Endothelial cell of umbilical vein (primary cell): ENCODE measurements at regions of chr12 and their contacts with region 1.

Region 1: DNA sequence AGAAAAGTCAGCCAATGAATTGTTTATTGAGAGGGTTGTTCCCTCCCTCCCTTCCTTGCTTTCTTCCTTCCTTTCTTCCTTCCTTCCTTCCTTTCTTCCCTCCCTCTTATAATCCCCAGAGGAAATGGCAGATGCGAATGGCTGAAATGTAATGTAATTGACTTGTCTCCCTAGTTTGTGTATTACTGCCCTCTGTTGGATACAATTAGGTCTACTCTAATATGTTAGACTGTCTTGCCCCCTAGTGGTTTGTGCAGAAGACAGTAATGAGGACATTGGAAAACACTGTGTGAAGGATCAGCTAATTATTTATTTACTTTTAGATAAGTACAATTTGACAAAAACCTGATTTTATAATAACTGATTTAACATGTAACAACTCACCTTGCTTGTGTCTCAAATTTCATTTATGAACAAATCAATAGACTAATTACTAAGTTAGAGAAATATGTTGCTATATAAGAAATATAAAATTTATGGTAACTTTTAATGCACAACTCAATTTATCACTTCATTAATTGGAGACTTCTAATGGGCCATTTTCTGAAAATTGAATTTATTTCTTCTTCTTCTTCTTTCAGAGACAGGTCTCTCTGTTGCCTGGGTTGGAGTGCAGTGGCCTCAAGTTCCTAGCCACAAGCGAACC is 229.8 kb upstream of the LRIG3 start:
- DNase-seq: peak; percentile 89
- H3K4me3 ChIP-seq: no peak overlapping the region
- H3K27ac ChIP-seq: no peak overlapping the region
- H3K4me1 ChIP-seq: no peaks in the 10 kb centered on the region
- H3K27me3 ChIP-seq: peaks cover 0 to 2% of the 10 kb centered on the region in 2 experiments
- CTCF ChIP-seq: peak; percentile 79 to 83
- POLR2A ChIP-seq: no peak

Region 2: DNA sequence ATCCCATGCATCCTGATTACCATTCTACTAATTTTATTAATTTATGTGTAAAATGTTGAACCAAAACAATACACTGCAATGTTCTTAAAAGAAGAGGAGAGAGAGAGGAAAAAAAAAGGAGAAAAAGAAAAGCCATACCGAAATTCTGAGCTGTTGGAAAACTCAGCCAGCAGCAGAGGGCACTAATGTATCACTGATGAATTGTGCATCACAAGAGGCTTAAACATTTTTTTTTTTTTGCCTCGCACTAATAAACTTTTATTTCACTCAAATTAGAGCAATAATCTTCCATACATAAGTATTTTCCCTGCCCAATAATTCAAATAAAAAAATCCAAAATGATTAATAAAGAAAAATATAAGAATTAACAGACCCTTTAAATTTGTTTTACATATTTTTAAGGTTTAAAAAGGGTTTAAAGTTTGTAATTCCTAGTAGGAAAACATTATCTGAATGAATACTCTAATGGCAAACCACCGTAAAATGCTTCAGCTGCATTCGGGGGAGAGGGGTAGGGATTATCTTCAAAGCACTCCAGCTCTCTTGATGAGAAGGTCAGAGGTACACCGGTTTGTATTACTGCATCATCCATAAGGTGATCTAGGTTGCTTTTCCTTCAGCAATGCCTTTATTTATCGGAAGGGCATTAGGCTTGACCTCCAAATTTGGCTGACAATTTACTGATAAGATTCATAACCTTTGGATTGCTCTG is 1166.8 kb before region 1 on chr12:
- CTCF ChIA-PET with region 1: interaction called, 45 read pairs
- POLR2A ChIA-PET with region 1: no interaction called
- dilution Hi-C with region 1: no loop called
- intact Hi-C with region 1: loop called (anchors 1 kb)
- DNase-seq: peak; percentile 72
- H3K4me3 ChIP-seq: no peak overlapping the region
- H3K27ac ChIP-seq: no peak overlapping the region
- H3K4me1 ChIP-seq: no peaks in the 10 kb centered on the region
- H3K27me3 ChIP-seq: peaks cover 0 to 3% of the 10 kb centered on the region in 2 experiments
- CTCF ChIP-seq: peak; percentile 25 to 55
- POLR2A ChIP-seq: no peak

Region 3: DNA sequence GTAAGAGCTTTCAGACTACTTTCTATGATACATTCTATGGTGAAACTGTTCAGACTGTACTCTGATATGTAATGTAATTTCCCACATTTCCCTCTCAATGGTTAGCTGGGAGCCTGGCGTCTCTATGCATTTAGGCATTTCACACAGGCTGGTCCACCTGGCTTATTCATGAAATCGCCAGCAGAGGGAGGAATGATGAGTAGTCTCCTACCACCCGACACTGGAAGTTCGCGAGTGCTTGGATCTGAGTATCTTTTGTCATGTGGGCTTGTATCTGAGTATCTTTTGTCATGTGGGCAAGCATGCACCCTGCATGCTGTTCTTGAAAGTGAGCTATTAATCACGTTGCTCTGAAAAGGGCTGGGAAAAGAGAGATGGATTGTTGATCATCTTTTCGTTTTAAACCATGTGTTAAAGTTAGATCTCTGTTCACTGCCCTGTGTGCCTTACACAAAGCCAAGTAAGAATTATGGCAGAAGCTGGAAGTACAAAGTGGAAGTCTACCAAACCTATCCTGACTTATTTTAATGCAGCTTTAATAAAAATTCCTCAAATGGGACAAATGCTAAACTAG is 973.7 kb before region 1 on chr12:
- CTCF ChIA-PET with region 1: interaction called, 16 read pairs
- POLR2A ChIA-PET with region 1: no interaction called
- dilution Hi-C with region 1: no loop called
- intact Hi-C with region 1: no loop called
- DNase-seq: peak; percentile 14
- H3K4me3 ChIP-seq: no peak overlapping the region
- H3K27ac ChIP-seq: no peak overlapping the region
- H3K4me1 ChIP-seq: no peaks in the 10 kb centered on the region
- H3K27me3 ChIP-seq: peaks cover 0 to 4% of the 10 kb centered on the region in 2 experiments
- CTCF ChIP-seq: peak; percentile 29 to 39
- POLR2A ChIP-seq: no peak

Region 4: DNA sequence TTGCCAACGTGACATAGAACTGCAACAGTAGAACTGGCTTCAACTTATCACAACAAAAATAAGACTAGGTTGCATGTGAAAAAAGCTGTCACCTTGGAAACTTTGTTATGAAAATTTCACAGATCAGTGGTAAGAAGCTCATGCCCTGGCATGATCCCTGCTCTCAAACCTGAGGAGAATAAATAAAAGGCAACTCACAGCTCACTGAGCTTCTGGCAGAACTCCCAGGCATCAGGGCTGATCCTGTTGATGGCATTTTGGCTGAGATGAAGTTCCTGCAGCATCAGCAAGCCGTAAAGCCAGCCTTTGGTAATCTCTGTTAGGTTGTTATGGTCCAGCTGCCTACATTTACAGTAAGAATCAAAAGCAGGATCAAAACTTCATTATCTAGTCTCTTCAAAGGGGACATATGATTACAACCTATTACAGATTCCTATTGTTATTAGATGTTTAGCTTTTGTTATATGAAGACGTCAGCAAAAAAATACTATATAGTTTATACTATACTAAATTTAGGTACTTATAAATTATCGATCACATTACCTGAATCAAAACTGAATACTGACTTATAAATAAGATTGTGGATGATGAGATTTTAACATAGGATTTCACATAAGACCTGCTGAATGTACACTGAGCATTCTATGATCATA is 261.9 kb before region 1 on chr12:
- CTCF ChIA-PET with region 1: interaction called, 4 read pairs
- POLR2A ChIA-PET with region 1: no interaction called
- dilution Hi-C with region 1: no loop called
- intact Hi-C with region 1: loop called (anchors 10 kb)
- DNase-seq: peak; percentile 39
- H3K4me3 ChIP-seq: no peak overlapping the region
- H3K27ac ChIP-seq: no peak overlapping the region
- H3K4me1 ChIP-seq: no peaks in the 10 kb centered on the region
- H3K27me3 ChIP-seq: no peaks in the 10 kb centered on the region
- CTCF ChIP-seq: no peak
- POLR2A ChIP-seq: no peak

Region 5: GRCh38 chr12:59113831-59114615 is 36.1 kb before region 1 on chr12:
- CTCF ChIA-PET with region 1: interaction called, 171 read pairs
- POLR2A ChIA-PET with region 1: no interaction called
- dilution Hi-C with region 1: no loop called
- intact Hi-C with region 1: loop called (anchors 1 kb)
- DNase-seq: peak; percentile 92
- H3K4me3 ChIP-seq: no peak overlapping the region
- H3K27ac ChIP-seq: no peak overlapping the region
- H3K4me1 ChIP-seq: peaks cover 4% of the 10 kb centered on the region
- H3K27me3 ChIP-seq: no peaks in the 10 kb centered on the region
- CTCF ChIP-seq: peak; percentile 82 to 94
- POLR2A ChIP-seq: no peak

Region 6: DNA sequence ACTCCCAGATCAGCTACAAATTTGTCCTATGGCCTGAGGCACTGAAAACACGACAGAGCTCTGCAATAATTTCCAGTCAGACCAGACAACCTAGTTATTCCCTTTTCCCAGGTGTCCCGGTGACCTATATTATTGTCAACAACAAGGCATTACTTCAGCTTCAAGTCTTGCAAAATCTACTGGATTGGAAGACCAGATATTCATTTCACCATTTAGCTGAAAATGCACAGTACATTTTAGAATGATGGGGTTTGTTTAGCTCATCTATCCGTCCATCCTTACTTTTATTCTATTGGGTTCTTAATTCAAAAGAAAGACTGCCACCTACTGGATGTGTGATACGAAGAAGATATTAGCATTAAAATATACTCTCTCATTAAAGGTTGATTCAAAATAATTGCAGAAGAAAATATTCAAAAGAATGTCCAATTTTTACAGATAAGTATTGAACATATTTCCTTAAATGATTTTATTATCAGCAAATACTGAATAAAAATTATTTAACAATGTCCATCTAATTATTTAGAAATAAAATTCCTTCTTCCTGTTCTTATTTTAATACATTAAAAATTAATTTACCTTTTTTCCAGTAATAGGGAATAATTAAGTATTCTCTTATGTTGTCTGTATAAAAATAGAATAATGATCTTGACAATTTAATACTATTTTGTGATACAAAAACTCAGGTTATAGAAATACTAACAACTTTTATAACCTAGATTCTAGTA is 15.0 kb after region 1 on chr12:
- CTCF ChIA-PET with region 1: interaction called, 52 read pairs
- POLR2A ChIA-PET with region 1: no interaction called
- dilution Hi-C with region 1: no loop called
- intact Hi-C with region 1: no loop called
- DNase-seq: peak; percentile 41
- H3K4me3 ChIP-seq: no peak overlapping the region
- H3K27ac ChIP-seq: no peak overlapping the region
- H3K4me1 ChIP-seq: no peaks in the 10 kb centered on the region
- H3K27me3 ChIP-seq: no peaks in the 10 kb centered on the region
- CTCF ChIP-seq: peak; percentile 17 to 30
- POLR2A ChIP-seq: no peak